Transverse colon (tissue), 4 donors: ENCODE measurements at regions of chrX and their contacts with region 1.

Region 1: DNA sequence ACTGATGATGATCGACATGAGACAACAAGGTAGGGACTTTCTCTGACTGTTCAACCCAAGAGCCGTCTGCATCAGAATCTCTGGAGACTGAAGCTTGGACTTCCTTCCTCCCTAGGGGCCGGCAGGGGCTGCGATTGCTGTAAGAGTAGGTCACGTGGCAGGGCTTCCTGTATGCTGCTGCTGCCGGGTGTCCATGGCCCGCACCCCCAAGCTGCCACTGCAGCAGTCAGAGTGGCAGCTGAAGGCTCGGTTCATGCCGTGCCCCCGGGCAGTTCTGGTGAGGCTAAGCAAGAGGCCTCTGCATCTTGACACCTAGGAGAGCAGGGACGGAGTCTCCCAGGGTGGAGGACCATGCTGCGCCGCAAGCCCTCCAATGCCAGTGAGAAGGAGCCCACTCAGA is at the start of gene SASH3:
- DNase-seq: peak; percentile 63
- H3K4me3 ChIP-seq: peak within 1 kb of the TSS in 2 of 4 donors; percentile 6 to 42
- H3K27ac ChIP-seq: peak within 1 kb of the TSS; percentile 51 to 79 (median 61)
- H3K4me1 ChIP-seq: no peaks in the 10 kb centered on the region
- H3K27me3 ChIP-seq: no peaks in the 10 kb centered on the region
- CTCF ChIP-seq: no peak
- EP300 ChIP-seq: no peak
- POLR2A ChIP-seq: peak; percentile 41
- total RNA-seq, gene SASH3: 1.6 to 20.9 (median 11.1) TPM

Region 2: GRCh38 chrX:129577473-129577872 is 202.3 kb before region 1 on chrX:
- in situ Hi-C with region 1: no loop called
- intact Hi-C with region 1: no loop called
- DNase-seq: no peak
- H3K4me3 ChIP-seq: no peak overlapping the region
- H3K27ac ChIP-seq: no peak overlapping the region
- H3K4me1 ChIP-seq: no peaks in the 10 kb centered on the region
- H3K27me3 ChIP-seq: no peaks in the 10 kb centered on the region
- CTCF ChIP-seq: no peak
- EP300 ChIP-seq: no peak
- POLR2A ChIP-seq: no peak

Region 3: DNA sequence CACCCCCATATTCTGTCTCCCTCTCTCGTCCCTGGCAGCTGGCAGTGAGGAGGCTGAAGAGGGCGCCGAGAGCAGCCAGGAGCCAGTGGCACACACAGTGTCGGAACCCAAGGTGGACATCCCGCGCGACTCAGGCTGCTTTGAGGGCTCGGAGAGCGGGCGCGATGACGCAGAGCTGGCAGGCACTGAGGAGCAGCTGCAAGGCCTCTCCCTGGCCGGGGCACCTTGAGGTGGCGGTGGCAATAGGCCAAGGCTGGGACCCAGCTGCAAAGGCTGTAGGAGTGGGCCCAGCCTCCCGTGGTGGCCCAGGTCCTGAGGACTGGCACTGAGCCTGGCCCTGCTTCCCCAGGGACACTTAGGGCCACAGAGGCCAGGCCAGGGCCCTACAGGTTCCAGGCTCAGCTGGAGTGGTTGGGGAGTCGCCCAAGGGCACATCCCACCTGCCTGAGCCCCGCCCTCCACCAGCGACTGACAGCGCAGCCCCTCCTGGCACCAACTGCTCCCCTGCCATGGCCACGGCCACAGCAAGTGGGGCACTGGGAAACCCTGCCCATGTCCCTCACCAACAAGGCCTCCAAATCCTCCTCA is 14.0 kb after region 1 on chrX:
- in situ Hi-C with region 1: no loop called
- intact Hi-C with region 1: loop called (anchors 1 kb)
- DNase-seq: no peak
- H3K4me3 ChIP-seq: no peak overlapping the region
- H3K27ac ChIP-seq: no peak overlapping the region
- H3K4me1 ChIP-seq: no peaks in the 10 kb centered on the region
- H3K27me3 ChIP-seq: no peaks in the 10 kb centered on the region
- CTCF ChIP-seq: no peak
- EP300 ChIP-seq: no peak
- POLR2A ChIP-seq: no peak